Activated CD4-positive, alpha-beta T cell treated with anti-CD3 and anti-CD28 coated beads, Interleukin-2, amount 10 ng/mL, durations not matched to agents 24 days and 14 days (primary cell): ENCODE measurements at regions of chr3 and their contacts with region 1.

Region 1: DNA sequence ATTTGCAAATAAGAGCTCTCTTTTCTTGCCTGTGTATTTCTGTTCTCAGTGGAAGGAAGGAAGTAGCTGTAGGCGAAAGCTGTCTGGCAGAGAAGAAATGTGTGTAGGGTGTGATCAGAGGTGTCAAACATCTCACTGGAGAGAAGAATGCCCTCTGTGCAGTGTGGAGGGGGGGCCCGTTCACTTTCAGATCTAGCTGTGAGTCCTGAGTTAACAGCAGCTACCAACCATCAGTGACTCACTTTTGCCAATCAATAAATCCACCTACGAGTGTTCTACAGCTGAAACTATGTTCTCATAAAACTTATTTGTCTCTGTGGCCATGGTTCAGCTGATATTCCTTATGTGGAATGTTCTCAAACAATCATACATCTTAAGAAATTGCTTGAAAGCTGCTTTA is 103.7 kb downstream of the FRMD4B start:
- DNase-seq: peak; percentile 69
- H3K4me3 Mint-ChIP-seq: peak overlapping the region; percentile 50
- H3K27ac Mint-ChIP-seq: peak overlapping the region; percentile 87
- H3K4me1 Mint-ChIP-seq: peaks cover 18% of the 10 kb centered on the region
- H3K27me3 Mint-ChIP-seq: peaks cover under 1% of the 10 kb centered on the region

Region 2: GRCh38 chr3:69240651-69241568 is 41.3 kb before region 1 on chr3:
- intact Hi-C with region 1: loop called (anchors 5 kb)
- DNase-seq: no peak
- H3K4me3 Mint-ChIP-seq: no peak overlapping the region
- H3K27ac Mint-ChIP-seq: no peak overlapping the region
- H3K4me1 Mint-ChIP-seq: peaks cover 16% of the 10 kb centered on the region
- H3K27me3 Mint-ChIP-seq: no peaks in the 10 kb centered on the region

Region 3: GRCh38 chr3:69433969-69434325 is 151.8 kb after region 1 on chr3:
- intact Hi-C with region 1: loop called (anchors 1 kb)
- DNase-seq: no peak
- H3K4me3 Mint-ChIP-seq: no peak overlapping the region
- H3K27ac Mint-ChIP-seq: peak overlapping the region; percentile 76
- H3K4me1 Mint-ChIP-seq: peaks cover 40% of the 10 kb centered on the region
- H3K27me3 Mint-ChIP-seq: peaks cover 3% of the 10 kb centered on the region